PC-9 (cell line): ENCODE measurements at regions of chr16 and their contacts with region 1.

Region 1: DNA sequence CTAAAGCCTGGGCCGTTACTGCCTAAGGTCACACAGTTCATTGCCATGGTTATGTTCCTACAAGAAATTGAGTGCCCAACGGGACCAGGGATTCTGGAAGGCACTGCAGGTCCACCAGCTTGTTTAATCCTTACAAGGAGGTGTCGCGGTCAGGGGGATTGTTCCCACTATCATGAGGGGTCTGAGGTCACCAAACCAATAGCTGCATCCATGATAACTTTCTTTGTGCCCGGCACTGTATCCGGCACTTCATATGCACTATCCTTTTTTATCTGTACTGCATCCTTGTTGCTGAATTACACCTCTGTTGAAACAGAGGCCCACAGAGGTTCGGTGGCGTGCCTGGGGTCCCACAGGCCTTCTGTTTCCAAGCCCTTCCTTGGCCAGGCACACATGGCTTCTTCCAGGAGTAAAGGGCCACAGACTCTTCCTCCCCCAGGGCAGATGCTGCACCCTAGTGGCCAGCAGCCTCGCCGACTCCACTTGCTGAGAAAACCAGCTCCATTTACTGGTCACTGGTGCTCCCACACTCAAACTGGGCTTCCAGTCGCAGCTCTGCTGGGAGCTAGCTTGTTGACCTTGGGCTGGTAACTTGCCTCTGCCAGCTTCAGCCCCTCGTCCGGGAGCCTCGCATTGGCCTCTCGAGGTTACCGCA is 82.0 kb upstream of the PLCG2 start:
- DNase-seq: peak; percentile 46 to 58
- H3K4me3 ChIP-seq: no peak overlapping the region
- H3K27ac ChIP-seq: no peak overlapping the region
- H3K4me1 ChIP-seq: no peaks in the 10 kb centered on the region
- H3K27me3 ChIP-seq: no peaks in the 10 kb centered on the region
- CTCF ChIP-seq: peak; percentile 72

Region 2: DNA sequence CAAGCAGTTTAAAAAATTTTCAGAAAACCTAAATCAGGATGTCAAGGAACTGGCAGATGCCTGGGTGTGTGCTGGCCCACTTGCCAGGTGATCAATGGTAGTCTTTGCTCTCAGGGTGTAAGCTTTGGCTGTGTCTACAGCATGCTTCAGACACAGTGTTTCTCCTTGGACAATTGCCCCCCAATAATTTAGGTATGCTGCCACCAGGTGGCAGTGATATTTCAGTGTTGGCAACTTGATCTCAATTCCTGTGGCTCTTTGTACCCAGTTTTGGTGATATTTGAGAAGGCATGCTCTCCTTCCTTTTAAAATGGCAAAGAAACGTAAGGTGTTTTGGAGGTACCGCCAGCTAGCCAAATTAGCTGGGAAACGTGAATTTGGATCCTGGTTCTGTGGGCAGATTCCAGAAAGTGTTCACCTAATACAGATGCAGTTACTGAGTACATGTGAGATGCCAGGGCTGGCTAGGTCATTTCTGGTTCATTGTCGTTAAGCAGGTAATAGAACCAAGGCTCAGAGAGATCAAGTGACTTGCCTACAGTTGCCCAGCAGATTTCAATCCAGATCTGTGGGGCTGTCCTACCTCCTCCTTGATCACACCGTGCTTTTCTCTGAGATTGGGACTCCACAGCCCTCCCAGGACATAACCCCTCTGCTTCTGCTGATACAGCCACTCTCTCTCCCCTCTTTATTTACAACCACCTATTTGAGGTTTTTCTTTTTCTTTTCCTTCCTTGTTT is 73.6 kb before region 1 on chr16:
- CTCF ChIA-PET with region 1: interaction called, 4 read pairs
- POLR2A ChIA-PET with region 1: no interaction called
- intact Hi-C with region 1: loop called (anchors 5 kb)
- DNase-seq: peak; percentile 46 to 63
- H3K4me3 ChIP-seq: no peak overlapping the region
- H3K27ac ChIP-seq: no peak overlapping the region
- H3K4me1 ChIP-seq: peaks cover 28% of the 10 kb centered on the region
- H3K27me3 ChIP-seq: no peaks in the 10 kb centered on the region
- CTCF ChIP-seq: peak; percentile 85

Region 3: DNA sequence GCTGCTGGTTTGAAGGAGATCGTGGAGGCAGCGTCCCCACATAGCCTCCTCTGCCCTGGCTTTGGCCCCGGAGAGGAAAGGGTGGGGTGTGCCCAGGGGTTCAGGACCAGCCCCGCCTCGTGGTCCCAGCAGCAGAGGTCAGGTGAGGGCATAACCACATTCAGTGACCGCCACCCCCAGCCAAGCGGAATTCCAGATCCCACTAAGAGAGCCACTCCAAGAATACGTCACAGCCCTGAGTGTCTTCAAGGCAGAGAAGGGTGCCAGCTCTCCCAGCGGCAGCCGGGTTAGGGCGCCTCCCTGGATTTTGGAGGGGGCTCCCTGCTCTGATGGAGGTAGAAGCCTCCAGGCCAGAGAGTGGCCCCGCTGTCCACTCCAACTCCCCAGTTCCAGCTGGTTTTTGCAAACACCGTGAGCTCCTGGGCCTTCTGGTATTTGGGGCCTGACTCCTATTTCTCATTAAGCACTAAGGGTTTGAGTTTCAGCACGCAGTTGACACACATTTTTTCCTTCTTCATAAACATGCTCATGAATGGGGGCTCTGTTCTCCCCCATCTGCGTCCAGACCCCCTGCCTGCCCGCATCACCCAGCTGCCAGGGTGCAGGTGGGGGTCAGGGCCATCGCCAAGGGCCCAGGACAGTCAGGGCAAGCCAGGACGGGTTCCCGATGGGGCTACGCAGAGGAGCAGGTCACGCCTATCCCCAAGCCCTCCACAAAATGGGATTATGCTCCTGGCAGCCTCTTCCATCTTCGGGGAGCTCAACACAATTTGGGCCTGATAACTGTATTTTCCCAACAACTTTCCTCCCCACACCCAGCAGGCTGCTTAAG is 16.4 kb before region 1 on chr16:
- CTCF ChIA-PET with region 1: interaction called, 10 read pairs
- POLR2A ChIA-PET with region 1: no interaction called
- intact Hi-C with region 1: no loop called
- DNase-seq: no peak
- H3K4me3 ChIP-seq: no peak overlapping the region
- H3K27ac ChIP-seq: no peak overlapping the region
- H3K4me1 ChIP-seq: no peaks in the 10 kb centered on the region
- H3K27me3 ChIP-seq: no peaks in the 10 kb centered on the region
- CTCF ChIP-seq: no peak

Region 4: DNA sequence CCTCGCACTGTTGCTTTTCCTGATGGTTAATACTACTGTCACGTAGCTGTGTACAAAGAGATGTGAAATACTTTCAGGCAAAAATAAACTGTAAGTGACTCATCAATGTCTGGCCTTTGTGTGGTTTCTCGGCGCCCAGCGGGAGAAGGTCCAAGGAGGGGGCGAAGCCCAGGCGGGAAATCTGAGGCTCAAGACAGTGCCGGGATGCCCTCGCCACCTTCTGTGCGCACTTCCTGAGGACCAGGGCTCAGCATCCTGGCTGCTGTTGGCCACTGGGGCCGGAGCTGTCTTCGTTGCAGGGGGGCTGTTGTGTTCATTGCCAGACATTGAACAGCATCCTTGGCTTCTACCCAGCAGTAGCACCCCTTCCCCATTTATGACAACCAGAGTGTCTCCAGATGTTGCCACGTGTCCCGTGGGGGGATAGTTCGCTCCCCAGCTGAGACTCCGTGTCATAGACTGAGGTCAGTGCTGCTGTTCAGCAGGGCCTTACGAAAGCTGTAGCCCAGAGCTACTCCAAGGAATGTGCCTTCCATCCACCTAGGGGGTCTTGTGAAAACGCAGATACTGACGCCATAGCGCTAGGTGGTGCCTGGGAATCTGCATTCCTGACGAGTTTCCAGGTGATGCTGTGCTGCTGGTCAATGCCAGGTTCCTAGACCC is 14.7 kb after region 1 on chr16:
- CTCF ChIA-PET with region 1: no interaction called
- POLR2A ChIA-PET with region 1: no interaction called
- intact Hi-C with region 1: no loop called
- DNase-seq: peak; percentile 85 to 91
- H3K4me3 ChIP-seq: no peak overlapping the region
- H3K27ac ChIP-seq: no peak overlapping the region
- H3K4me1 ChIP-seq: peaks cover 27% of the 10 kb centered on the region
- H3K27me3 ChIP-seq: no peaks in the 10 kb centered on the region
- CTCF ChIP-seq: no peak